Panc1 (cell line): ENCODE measurements at regions of chr18 and their contacts with region 1.

Region 1: DNA sequence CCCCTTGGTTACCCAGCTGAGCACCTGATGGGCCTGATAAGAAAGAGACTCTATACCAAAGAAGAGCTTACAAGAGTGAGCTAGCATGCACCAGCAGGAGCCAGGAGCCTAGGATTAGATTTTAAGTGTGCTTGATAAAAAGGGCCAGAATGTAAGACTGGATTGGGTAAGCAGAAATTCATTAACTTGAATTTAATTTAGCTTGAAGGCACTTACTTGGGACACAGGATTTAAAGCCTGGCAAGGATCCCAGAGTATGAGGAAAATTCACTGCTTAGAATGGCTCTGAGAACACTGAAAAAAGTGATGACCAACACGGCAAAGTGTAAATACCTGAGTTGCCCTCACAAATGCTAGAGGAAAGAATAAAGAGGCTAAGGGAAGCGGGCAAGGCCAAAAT is 91.3 kb upstream of the RBBP8 start:
- DNase-seq: no peak
- ATAC-seq: no peak
- H3K4me3 ChIP-seq: no peak overlapping the region
- H3K27ac ChIP-seq: no peak overlapping the region
- H3K4me1 ChIP-seq: no peaks in the 10 kb centered on the region
- H3K27me3 ChIP-seq: no peaks in the 10 kb centered on the region
- CTCF ChIP-seq: no peak

Region 2: GRCh38 chr18:23422672-23423418 is 581.0 kb after region 1 on chr18:
- CTCF ChIA-PET with region 1: interaction called, 13 read pairs
- POLR2A ChIA-PET with region 1: no interaction called
- in situ Hi-C with region 1: no loop called
- intact Hi-C with region 1: no loop called
- DNase-seq: no peak
- ATAC-seq: no peak; the same call in 1 of the 2 replicates
- H3K4me3 ChIP-seq: no peak overlapping the region
- H3K27ac ChIP-seq: no peak overlapping the region
- H3K4me1 ChIP-seq: no peaks in the 10 kb centered on the region
- H3K27me3 ChIP-seq: no peaks in the 10 kb centered on the region
- CTCF ChIP-seq: no peak